ENCODE measurements at regions of chr1 and their contacts with region 1.

Region 1: GRCh38 chr1:43946236-43947060 is at the start of gene IPO13:
- H3K4me3 ChIP-seq: peak within 1 kb of the TSS; percentile 85
- H3K27ac ChIP-seq: peak within 1 kb of the TSS; percentile 89
- H3K4me1 ChIP-seq: 0 out of 2 replicates have a peak, but pooled peaks cover 4% of the 10 kb centered on the region
- CTCF ChIP-seq: peak; percentile 100

Region 2: DNA sequence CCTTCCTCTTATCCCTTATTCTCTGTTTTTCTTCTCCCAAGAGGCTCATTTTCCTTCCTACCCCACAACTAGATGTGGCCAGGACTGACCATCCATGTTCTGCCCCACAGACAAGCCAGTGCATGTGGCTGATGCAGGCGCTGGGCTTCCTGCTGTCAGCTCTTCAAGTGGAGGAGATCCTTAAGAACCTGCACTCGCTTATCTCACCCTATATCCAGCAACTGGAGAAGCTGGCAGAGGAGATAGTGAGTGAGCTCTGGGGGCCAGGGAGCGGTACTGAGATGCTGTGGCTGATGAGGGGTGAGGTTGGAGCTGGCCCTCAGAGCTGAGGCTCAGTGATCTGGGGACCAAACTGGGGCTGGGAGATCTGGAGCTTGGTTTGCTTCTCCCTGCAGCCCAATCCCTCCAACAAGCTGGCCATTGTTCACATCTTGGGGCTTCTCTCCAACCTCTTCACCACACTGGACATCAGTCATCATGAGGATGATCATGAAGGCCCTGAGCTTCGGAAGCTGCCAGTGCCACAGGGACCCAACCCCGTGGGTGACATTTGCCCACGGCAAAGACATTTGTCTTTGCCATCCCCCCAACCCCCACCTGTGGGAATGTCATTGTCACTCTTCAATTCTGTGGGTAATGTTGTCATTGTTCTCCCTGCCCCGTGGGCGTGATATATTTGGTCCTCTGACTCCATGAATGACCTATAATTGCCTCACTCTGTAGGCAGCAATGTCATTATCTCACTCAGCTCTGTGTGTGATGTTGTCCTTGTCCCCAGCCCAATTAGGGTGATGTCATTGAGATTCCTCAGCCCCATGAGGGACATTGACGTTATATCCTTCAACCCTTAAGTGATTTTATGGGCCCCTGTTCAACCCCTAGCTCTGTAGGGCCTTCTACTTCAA is 12.2 kb after region 1 on chr1:
- CTCF ChIA-PET with region 1: no interaction called
- POLR2A ChIA-PET with region 1: interaction called, 11 read pairs
- H3K4me3 ChIP-seq: no peak overlapping the region
- H3K27ac ChIP-seq: no peak overlapping the region
- H3K4me1 ChIP-seq: no peaks in the 10 kb centered on the region
- CTCF ChIP-seq: no peak

Region 3: GRCh38 chr1:43974443-43975248 is 28.2 kb after region 1 on chr1 and contains the start of gene ATP6V0B:
- CTCF ChIA-PET with region 1: interaction called, 4 read pairs
- POLR2A ChIA-PET with region 1: interaction called, 15 read pairs
- H3K4me3 ChIP-seq: peak within 1 kb of the TSS; percentile 88
- H3K27ac ChIP-seq: peak within 1 kb of the TSS; percentile 70
- H3K4me1 ChIP-seq: no peaks in the 10 kb centered on the region
- CTCF ChIP-seq: peak; percentile 89

Region 4: GRCh38 chr1:44029906-44030604 is 83.6 kb after region 1 on chr1:
- CTCF ChIA-PET with region 1: no interaction called
- POLR2A ChIA-PET with region 1: no interaction called
- H3K4me3 ChIP-seq: peak overlapping the region; percentile 67
- H3K27ac ChIP-seq: peak overlapping the region; percentile 85
- H3K4me1 ChIP-seq: peaks cover 5% of the 10 kb centered on the region; the same call in 1 of the 2 replicates
- CTCF ChIP-seq: no peak; the same call in 1 of the 2 replicates